ENCODE measurements at regions of chr2 and their contacts with region 1.

Region 1: GRCh38 chr2:37672104-37672869 is 845 bp upstream of the CDC42EP3 start:
- DNase-seq: peak; percentile 71
- H3K4me3 Mint-ChIP-seq: peak overlapping the region; percentile 75
- H3K27ac Mint-ChIP-seq: peak overlapping the region; percentile 63
- H3K4me1 Mint-ChIP-seq: peaks cover 40% of the 10 kb centered on the region
- H3K27me3 Mint-ChIP-seq: no peaks in the 10 kb centered on the region

Region 2: DNA sequence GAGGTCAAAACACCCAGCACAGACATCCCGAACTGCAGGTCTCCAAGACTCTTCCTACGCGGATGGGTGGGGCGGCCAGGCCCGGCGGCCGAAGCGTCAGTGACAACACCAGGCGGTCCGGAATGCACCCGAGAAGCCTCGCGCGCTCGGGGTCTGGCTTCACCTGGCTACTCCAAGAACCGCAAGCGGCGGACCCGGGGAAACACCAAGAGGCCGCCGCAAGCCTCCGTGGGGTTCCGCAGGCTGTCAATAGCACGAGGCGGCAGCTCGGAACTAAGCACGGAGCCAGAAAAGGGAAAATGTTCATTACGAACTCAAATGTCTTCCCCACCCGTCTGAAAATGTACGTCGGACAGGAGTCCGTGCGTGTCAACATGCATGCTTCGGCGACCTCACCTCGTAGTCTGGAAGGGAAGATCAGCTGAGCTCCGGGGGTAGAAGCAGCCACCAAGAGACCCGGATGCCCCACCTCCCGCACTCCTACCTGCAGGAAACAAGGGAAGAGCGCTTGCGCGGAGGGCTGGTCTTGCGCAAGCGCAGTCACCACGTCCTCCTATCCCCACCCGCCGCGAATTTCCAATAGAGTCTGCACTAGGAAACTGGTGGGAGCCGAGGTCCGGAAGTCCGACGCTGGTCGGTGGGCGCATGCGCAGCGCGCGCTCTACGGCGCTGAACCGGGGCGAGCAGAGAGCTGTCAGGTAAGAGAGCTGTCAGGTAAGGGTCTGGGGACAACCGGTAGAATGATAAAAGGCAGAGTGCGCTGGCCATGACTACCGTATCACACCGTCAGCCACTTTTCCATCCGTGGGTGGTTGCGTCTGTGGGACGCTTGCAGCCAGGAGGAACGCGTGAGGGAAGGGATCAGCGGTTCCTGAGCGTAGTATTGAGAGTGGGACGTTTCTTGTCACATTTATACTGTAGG is 588.2 kb before region 1 on chr2 and contains the starts of genes GPATCH11 and HEATR5B:
- CTCF ChIA-PET with region 1: no interaction called
- intact Hi-C with region 1: loop called (anchors 5 kb)
- DNase-seq: peak; percentile 93
- H3K4me3 Mint-ChIP-seq: no peak within 1 kb of the TSS
- H3K27ac Mint-ChIP-seq: no peak within 1 kb of the TSS
- H3K4me1 Mint-ChIP-seq: peaks cover 26% of the 10 kb centered on the region
- H3K27me3 Mint-ChIP-seq: no peaks in the 10 kb centered on the region
- total RNA-seq, gene GPATCH11: 9.8 to 10.4 TPM
- total RNA-seq, gene HEATR5B: 15.5 to 15.8 TPM

Region 3: GRCh38 chr2:37654932-37655331 is 17.4 kb before region 1 on chr2:
- CTCF ChIA-PET with region 1: interaction called, 5 read pairs
- intact Hi-C with region 1: loop called (anchors 1 kb)
- DNase-seq: no peak
- H3K4me3 Mint-ChIP-seq: peak overlapping the region; percentile 33
- H3K27ac Mint-ChIP-seq: peak overlapping the region; percentile 71
- H3K4me1 Mint-ChIP-seq: peaks cover 80% of the 10 kb centered on the region
- H3K27me3 Mint-ChIP-seq: no peaks in the 10 kb centered on the region

Region 4: GRCh38 chr2:37683921-37684780 is 11.9 kb after region 1 on chr2:
- CTCF ChIA-PET with region 1: no interaction called
- intact Hi-C with region 1: loop called (anchors 1 kb)
- DNase-seq: no peak
- H3K4me3 Mint-ChIP-seq: no peak overlapping the region
- H3K27ac Mint-ChIP-seq: peak overlapping the region; percentile 81
- H3K4me1 Mint-ChIP-seq: peaks cover 26% of the 10 kb centered on the region
- H3K27me3 Mint-ChIP-seq: no peaks in the 10 kb centered on the region

Region 5: DNA sequence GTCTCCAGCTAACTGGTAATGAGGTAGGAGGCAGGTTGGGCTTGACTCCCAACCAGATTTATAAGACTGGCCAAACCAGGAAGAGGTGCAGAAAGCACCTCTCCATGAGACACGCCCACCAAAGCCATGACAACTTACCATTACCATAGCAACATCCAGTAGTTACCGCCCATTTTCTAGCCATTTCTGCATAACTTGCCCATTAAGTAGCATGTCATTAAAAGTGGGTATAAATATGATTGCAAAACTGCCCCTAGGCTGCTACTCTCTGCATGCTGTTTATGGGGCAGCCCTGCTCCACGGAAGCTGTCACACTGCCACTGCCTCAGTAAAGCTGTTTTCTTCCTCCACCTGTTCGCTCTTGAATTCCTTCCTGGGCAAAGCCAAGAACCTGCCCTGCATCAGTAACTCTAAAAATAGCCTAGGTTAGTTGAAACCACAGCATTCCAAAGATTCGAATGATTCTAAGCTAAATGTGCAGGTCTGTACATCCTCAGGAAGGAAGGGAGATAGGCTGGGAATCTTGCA is 572.9 kb after region 1 on chr2:
- CTCF ChIA-PET with region 1: no interaction called
- intact Hi-C with region 1: no loop called
- DNase-seq: no peak
- H3K4me3 Mint-ChIP-seq: no peak overlapping the region
- H3K27ac Mint-ChIP-seq: no peak overlapping the region
- H3K4me1 Mint-ChIP-seq: no peaks in the 10 kb centered on the region
- H3K27me3 Mint-ChIP-seq: no peaks in the 10 kb centered on the region

Measured in activated naive CD4-positive, alpha-beta T cell treated with anti-CD3 and anti-CD28 coated beads for 36 hours (primary cell).